ENCODE measurements at regions of chr3 and their contacts with region 1.

Region 1: GRCh38 chr3:142498397-142499180 is 50.8 kb upstream of the XRN1 start:
- DNase-seq: no peak
- H3K4me3 Mint-ChIP-seq: no peak overlapping the region
- H3K27ac Mint-ChIP-seq: peak overlapping the region; percentile 53
- H3K4me1 Mint-ChIP-seq: peaks cover 9% of the 10 kb centered on the region
- H3K27me3 Mint-ChIP-seq: no peaks in the 10 kb centered on the region

Region 2: GRCh38 chr3:142509079-142509478 is 10.5 kb after region 1 on chr3:
- intact Hi-C with region 1: loop called (anchors 1 kb)
- DNase-seq: peak; percentile 65
- H3K4me3 Mint-ChIP-seq: peak overlapping the region; percentile 81
- H3K27ac Mint-ChIP-seq: peak overlapping the region; percentile 90
- H3K4me1 Mint-ChIP-seq: peaks cover 16% of the 10 kb centered on the region
- H3K27me3 Mint-ChIP-seq: no peaks in the 10 kb centered on the region